SK-N-SH (cell line): ENCODE measurements at regions of chr7 and their contacts with region 1.

Region 1: DNA sequence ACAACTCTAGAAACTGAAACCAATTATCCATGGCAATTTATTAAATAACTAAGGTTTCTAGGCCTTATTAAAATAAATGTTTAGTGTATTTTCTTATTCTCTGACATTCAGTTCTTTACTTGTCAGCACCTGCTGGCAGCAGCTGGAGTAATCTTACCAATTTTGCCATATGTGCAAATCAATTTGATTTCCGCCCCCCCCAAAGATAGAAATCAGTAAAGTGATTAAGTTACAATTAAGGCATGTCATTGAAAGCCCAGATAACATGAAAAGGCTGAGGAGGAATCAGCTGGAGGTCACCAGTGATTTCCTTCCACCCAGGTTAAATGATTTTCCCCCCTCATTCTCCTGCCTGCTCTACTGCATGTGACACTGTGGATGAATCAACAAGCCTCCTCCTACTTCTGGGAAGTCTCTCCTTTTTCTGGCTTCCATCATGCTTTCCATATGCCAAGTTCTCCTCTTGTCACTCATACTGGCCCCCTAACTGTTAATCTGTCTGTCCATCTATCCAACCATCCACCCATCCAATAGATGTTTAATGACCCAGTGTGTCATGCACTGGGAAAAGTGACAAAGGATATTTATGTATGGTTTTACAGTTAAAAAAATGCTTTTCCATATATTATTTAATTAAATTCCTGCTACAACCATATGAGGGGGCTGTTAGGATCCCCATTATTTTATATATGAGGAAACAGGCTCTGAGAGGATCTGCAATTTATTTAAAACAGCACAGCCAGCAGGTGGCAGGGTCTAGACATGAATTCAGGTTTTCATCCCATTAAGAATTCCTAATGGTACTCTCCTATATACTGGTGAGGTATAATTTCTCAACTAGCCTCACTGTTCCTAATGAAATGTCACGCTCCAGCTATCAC is 116.5 kb downstream of the ATXN7L1 start:
- DNase-seq: peak; percentile 53
- H3K4me3 ChIP-seq: no peak overlapping the region
- H3K27ac ChIP-seq: peak overlapping the region; percentile 20 to 44
- H3K4me1 ChIP-seq: peaks cover 16 to 20% of the 10 kb centered on the region in 2 experiments
- H3K27me3 ChIP-seq: no peaks in the 10 kb centered on the region
- CTCF ChIP-seq: peak; percentile 97
- EP300 ChIP-seq: peak in 1 of 2 experiments; percentile 53; a peak in 2 of 4 replicates
- RAD21 ChIP-seq: peak; percentile 96

Region 2: DNA sequence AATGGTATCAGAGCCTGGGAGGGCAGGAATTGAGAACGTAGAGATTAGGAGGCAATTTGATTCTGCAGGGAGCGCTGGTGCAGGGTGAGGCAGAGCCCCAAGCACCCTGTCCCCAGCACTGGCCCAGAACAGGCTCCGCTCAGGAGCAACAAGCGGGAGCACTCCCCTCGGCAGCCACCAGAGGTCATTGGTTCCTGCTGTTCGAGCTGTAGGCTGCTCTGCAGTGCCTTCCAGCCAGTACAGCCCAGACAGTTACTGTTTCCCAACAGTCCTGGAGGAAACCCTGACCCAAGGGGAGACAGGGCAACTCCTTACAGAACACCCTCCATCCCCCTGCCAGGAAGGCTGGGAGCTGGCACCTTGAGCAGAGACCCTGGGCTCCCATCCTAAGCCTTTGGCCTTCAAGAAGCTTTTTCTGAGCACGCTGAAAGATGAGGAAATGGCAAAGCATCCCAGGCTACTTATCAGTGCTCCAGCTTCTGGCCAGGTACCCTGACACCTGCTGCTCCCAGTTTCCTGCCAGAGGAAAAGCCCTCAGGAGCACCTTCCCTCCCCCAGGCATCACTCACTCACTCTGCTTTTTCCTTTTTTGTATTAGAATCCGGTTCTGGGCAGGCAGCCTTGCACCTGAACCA is 107.4 kb before region 1 on chr7:
- CTCF ChIA-PET with region 1: interaction called, 60 read pairs
- POLR2A ChIA-PET with region 1: no interaction called
- DNase-seq: peak; percentile 91
- H3K4me3 ChIP-seq: no peak overlapping the region
- H3K27ac ChIP-seq: no peak overlapping the region
- H3K4me1 ChIP-seq: peaks cover 22 to 36% of the 10 kb centered on the region in 2 experiments
- H3K27me3 ChIP-seq: no peaks in the 10 kb centered on the region
- CTCF ChIP-seq: peak; percentile 93
- EP300 ChIP-seq: no peak
- RAD21 ChIP-seq: peak; percentile 97

Region 3: GRCh38 chr7:105748701-105749100 is 11.2 kb before region 1 on chr7:
- CTCF ChIA-PET with region 1: interaction called, 28 read pairs
- POLR2A ChIA-PET with region 1: no interaction called
- DNase-seq: no peak
- H3K4me3 ChIP-seq: no peak overlapping the region
- H3K27ac ChIP-seq: no peak overlapping the region
- H3K4me1 ChIP-seq: no peaks in the 10 kb centered on the region
- H3K27me3 ChIP-seq: no peaks in the 10 kb centered on the region
- CTCF ChIP-seq: no peak
- EP300 ChIP-seq: no peak
- RAD21 ChIP-seq: no peak

Region 4: GRCh38 chr7:105876091-105876963 is 116.4 kb after region 1 on chr7 and contains the start of gene ATXN7L1:
- CTCF ChIA-PET with region 1: interaction called, 79 read pairs
- POLR2A ChIA-PET with region 1: no interaction called
- DNase-seq: peak; percentile 98
- H3K4me3 ChIP-seq: peak within 1 kb of the TSS; percentile 86 to 90
- H3K27ac ChIP-seq: peak within 1 kb of the TSS; percentile 84 to 96
- H3K4me1 ChIP-seq: peaks cover 0 to 45% of the 10 kb centered on the region in 2 experiments; a peak in 3 of 4 replicates
- H3K27me3 ChIP-seq: no peaks in the 10 kb centered on the region
- CTCF ChIP-seq: peak; percentile 37
- EP300 ChIP-seq: peak in 1 of 2 experiments; percentile 4; a peak in 2 of 4 replicates
- RAD21 ChIP-seq: peak; percentile 36
- polyA plus RNA-seq, gene ATXN7L1: 6.0 and 6.2 TPM in 2 replicates

Region 5: GRCh38 chr7:106009403-106010226 is 249.7 kb after region 1 on chr7:
- CTCF ChIA-PET with region 1: interaction called, 14 read pairs
- POLR2A ChIA-PET with region 1: no interaction called
- DNase-seq: peak; percentile 91
- H3K4me3 ChIP-seq: no peak overlapping the region; a peak in 1 of 4 replicates
- H3K27ac ChIP-seq: peak overlapping the region in 1 of 2 experiments; percentile 7; a peak in 1 of 4 replicates
- H3K4me1 ChIP-seq: peaks cover 8 to 24% of the 10 kb centered on the region in 2 experiments
- H3K27me3 ChIP-seq: no peaks in the 10 kb centered on the region
- CTCF ChIP-seq: peak; percentile 99
- EP300 ChIP-seq: 0 out of 4 replicates have a peak, but pooled peaks have one; percentile 26 to 36
- RAD21 ChIP-seq: peak; percentile 83